ENCODE measurements at regions of chr7 and their contacts with region 1.

Region 1: DNA sequence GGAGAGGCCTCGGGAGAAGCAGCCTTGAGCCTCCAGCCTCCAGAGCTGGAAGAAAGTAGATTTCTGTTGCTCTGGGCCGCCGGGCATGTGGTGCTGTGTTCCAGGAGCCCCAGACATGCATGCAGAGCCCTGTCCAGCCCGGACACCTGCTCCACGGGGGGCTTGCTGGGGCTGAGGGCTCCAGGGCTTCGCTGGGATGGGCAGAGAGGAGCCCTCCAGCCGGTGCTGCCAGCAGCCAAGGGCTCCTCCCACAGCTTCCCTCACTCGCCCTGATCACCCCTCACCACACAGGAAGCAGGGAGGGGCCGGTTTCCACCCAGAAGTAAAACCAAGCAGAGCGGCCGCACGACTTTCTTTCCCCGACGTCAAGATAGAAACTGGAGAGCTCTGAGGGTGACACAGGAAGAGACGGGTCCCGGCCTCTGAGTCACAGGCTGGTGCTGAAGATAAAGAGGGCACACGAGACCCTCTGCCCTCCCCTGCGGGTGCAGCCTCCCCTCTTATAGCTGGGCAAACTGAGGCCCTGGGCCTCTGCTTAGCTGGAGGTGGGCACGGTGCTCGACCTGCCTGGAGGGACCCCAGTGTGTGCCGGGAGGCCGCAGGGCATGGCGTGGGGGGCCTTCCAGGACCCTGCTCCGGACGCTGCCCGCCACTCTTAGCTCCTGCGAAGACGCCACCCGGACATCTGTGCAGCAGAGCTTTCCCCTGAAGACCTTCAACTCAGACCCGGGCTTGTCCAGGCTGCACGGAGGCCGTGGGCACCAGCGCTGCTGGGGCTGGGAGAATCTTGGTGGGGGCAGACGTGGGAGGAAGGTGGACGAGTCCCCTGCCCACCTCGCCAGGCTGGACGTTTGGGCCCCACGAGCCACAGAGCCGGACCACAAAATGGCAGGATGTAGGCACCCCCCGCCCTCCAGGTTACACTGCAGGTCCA is 31.1 kb downstream of the ADAP1 start:
- DNase-seq: peak; percentile 97
- ATAC-seq: peak; percentile 92
- H3K4me3 Mint-ChIP-seq: peak overlapping the region; percentile 72
- H3K27ac Mint-ChIP-seq: peak overlapping the region; percentile 93
- H3K4me1 Mint-ChIP-seq: peaks cover 39% of the 10 kb centered on the region
- H3K27me3 Mint-ChIP-seq: no peaks in the 10 kb centered on the region

Region 2: DNA sequence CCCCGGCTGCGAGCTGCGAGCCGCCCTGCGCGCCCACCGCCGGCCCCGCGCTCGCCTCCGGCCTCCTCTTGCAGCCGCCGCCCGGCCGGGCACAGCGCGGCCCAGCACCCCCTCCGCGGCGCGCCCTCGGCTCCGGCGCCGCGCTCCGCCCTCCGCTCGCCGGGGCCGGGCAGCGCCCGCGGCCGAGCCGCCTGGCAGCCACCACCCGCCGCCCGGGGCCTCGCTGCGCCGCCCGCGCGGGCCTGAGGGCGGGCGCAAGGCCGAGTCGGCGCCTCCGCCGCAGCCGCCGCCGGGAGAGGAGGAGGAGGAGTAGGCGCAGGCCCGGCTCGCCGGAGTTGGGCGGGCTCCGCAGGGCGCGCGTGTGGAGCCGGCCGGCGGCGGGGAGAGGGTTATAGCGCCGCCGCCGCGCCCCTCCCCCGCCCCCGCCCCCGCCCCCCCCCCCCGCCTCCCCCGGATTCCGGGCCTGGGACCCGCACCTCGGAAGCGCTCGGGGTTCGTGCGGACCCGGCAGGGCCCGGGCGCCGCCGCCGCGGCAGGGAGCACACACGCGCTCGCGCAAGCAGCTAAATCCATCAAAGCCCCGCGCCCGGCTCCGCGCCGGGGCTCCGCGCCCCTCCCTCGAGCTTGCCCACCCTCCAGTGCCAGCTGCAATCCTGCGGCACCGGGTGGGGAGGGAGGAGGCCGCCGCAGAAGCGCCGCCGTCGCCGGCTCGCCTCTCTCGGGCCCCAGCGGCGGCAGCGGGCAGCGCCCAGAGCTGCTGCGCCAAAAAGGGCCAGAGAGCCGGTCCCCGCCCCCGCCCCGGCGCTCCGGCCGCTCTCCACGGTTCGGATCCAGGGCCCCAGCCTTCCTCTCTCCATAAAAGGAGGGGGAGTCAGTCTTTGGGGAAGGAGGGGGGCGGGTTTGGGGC is 403.6 kb before region 1 on chr7 and contains the start of gene PDGFA:
- CTCF ChIA-PET with region 1: no interaction called
- POLR2A ChIA-PET with region 1: no interaction called
- intact Hi-C with region 1: no loop called
- DNase-seq: peak; percentile 55
- ATAC-seq: peak; percentile 30
- H3K4me3 Mint-ChIP-seq: peak within 1 kb of the TSS; percentile 73
- H3K27ac Mint-ChIP-seq: no peak within 1 kb of the TSS
- H3K4me1 Mint-ChIP-seq: peaks cover 13% of the 10 kb centered on the region
- H3K27me3 Mint-ChIP-seq: peaks cover 41% of the 10 kb centered on the region
- total RNA-seq, gene PDGFA: 5.2 to 5.3 TPM

Region 3: GRCh38 chr7:831596-832166 is 91.7 kb before region 1 on chr7:
- CTCF ChIA-PET with region 1: no interaction called
- POLR2A ChIA-PET with region 1: no interaction called
- intact Hi-C with region 1: loop called in 1 of 2 experiments (anchors 1 kb)
- DNase-seq: no peak
- ATAC-seq: peak; percentile 69
- H3K4me3 Mint-ChIP-seq: peak overlapping the region; percentile 63
- H3K27ac Mint-ChIP-seq: peak overlapping the region; percentile 98
- H3K4me1 Mint-ChIP-seq: peaks cover 64% of the 10 kb centered on the region
- H3K27me3 Mint-ChIP-seq: no peaks in the 10 kb centered on the region

Region 4: DNA sequence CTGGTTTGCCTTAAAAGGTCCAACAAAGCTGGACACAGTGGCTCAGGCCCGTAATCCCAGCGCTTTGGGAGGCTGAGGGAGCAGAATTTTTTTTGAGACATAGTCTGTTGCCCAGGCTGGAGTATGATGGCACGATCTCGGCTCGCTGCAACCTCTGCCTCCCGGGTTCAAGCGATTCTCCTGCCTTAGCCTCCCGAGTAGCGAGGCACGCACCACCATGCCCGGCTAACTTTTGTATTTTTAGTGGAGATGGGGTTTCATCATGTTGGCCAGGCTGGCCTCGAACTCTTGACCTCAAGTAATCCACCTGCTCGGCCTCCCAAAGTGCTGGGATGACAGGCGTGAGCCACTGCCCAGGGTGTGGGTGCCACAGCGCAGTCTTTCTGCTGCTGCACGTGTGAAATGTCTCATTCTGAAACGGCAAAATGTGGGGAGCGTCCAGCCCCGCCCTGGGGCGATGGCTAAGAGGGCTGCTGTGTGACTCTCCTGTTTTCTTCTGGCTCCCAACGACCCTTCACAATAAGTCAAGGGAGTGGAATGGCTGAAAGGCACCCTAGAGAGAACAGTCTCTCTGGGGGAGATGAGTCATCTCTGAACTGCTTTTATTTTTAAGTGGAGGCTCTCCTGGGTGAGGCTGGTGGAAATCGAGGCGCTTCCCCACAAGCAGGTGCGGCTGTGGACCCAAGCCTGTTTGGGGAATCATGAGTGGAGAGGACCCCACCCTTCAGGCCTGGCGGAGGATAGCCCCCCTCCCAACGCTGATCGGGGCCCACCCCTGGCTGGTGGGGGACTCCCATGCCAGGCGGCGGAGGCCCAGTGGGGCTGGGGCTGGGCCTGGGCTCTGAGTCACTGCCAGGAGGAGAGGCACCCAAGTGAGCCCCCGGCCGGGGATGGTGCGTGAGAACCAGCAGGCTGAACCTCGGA is 13.0 kb after region 1 on chr7:
- CTCF ChIA-PET with region 1: interaction called, 3 read pairs
- POLR2A ChIA-PET with region 1: interaction called, 3 read pairs
- intact Hi-C with region 1: loop called in 1 of 2 experiments (anchors 2 kb)
- DNase-seq: peak; percentile 68
- ATAC-seq: peak; percentile 86
- H3K4me3 Mint-ChIP-seq: no peak overlapping the region
- H3K27ac Mint-ChIP-seq: peak overlapping the region; percentile 26
- H3K4me1 Mint-ChIP-seq: peaks cover 35% of the 10 kb centered on the region
- H3K27me3 Mint-ChIP-seq: no peaks in the 10 kb centered on the region

Region 5: DNA sequence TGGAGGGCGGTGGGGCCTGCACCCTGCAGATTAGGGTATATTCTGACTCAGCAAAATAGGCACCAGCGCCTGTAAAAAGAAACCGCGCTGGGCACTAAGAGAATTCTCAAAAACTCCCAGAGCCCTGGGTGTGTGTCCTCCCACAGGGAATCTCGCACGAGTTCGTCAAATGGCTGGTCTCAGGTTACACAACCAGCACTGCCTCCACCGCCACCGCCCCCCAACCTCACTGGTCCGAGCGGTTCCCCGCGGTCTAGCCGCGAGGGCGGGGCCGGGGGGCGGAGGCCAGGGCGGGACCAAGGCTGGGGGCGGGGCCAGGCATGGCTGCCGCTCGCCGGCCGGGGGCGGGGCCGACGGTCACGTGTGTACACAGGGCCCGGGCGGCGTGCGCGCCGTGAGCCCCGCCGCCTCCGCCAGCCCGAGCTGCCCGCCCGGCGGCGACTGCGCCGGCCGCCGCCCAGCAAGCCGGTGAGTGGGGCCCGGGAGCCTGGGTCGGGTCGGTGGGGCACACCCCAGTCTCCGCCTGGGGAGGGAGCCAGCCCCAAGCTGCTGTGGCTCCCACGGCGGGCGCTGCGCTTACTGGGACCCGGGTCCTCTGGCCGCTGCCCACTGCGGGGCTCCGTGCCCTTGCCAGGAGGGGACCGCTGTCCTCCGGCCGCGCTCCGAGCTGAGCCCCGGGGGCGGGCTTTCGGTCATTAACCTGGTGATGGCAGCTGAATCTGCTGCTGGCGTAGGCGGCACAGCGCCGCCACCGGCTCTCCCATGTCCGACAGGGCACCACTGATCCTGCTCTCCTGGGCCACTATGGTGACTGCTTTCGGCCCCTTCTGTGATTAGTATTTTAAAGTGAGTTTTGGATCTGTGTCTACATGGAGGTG is 121.1 kb after region 1 on chr7 and contains the start of gene GPR146:
- CTCF ChIA-PET with region 1: interaction called, 4 read pairs
- POLR2A ChIA-PET with region 1: no interaction called
- intact Hi-C with region 1: loop called in 1 of 2 experiments (anchors 5 kb)
- DNase-seq: peak; percentile 96
- ATAC-seq: peak; percentile 88
- H3K4me3 Mint-ChIP-seq: peak within 1 kb of the TSS; percentile 78
- H3K27ac Mint-ChIP-seq: peak within 1 kb of the TSS; percentile 73
- H3K4me1 Mint-ChIP-seq: peaks cover 61% of the 10 kb centered on the region
- H3K27me3 Mint-ChIP-seq: no peaks in the 10 kb centered on the region
- total RNA-seq, gene GPR146: 4.7 to 5.6 TPM

Region 6: DNA sequence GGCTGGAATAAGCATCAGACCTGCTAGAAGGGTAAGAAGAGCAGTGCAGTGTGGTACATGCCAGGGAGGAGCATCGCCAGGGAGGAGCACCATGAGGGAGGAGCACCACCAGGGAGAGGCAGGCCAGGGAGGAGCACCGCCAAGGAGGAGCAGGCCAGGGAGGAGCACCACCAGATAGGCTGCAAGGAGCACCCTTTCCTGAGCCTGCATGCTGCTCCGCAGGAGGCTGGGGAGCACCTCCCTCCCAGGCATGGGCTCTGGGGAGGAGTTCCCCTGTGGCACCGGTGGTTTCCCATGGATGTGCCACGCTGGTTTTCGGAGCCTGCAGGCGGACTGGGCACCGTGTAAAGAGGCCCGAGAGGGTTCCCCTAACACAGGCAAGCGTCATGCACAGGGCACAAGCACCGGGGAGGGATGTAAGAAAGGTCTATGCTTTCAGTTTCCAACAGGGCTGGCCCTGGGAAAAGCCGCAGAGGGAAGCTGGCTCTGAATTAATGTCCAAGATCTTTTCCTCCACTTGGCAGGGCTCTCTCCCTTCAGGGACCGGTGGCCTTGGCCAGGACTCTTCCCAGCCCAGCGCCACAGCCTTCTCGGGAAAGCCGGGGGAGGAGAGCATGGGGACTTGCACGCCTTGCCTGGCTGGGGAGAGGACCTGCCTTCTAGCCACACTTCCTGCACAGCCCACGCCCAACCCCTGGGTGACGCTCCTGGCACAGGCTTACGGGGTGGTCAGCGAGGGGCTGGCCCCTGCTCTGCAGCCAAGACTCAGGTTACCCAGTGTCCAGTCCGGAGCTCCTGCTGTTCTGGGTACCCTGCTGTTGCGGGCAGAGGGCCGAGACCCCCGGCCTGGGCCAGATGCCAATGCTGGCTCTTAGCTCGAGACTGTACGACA is 153.1 kb after region 1 on chr7:
- CTCF ChIA-PET with region 1: no interaction called
- POLR2A ChIA-PET with region 1: no interaction called
- intact Hi-C with region 1: no loop called
- DNase-seq: no peak
- ATAC-seq: no peak
- H3K4me3 Mint-ChIP-seq: no peak overlapping the region
- H3K27ac Mint-ChIP-seq: no peak overlapping the region
- H3K4me1 Mint-ChIP-seq: no peaks in the 10 kb centered on the region
- H3K27me3 Mint-ChIP-seq: no peaks in the 10 kb centered on the region

Region 7: DNA sequence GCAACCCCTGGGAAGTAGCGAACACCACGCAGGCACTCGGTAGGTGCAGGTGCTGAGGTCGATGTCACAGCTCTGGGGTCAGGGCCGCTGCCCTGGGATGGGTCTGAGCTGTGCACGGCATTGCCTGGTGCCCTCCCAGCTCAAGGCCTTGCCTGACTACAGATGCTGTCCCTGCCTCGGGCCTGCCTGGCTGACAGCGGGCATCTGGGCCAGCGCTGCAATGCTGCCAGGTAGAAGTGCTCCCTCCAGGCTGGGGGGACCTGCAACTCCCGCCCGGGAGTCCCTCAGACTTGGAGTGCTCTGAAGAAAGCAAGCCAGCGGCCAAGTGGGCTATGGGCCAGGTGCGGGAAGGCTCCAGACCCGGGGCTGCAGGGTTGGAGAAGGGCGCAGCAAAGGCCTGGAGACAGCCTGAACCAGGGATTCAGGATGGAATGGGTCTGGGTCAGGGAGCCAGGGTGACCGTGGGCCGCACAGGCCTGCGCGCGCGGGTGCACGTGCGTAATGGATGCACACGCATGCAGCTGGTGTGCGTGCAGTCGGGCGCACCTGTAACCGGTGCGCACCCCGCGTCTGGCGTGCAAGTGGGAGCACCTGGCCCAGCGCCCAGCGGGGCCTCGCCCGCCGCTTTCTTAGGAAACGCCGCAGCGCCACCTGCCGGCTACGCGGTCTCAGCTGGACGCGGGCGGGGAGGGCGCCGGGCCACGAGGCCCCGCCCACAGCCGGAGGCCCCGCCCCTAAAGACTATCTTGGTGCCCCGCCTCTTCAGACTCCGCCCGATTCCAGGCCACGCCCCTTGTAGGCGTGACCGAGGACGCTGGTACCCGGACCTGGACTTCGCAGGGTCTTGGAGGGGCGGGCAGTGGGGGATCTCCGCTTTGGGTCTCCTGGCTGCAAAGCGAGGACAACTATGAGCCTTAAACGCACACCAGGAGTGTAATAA is 489.2 kb after region 1 on chr7:
- CTCF ChIA-PET with region 1: no interaction called
- POLR2A ChIA-PET with region 1: no interaction called
- intact Hi-C with region 1: loop called in 1 of 2 experiments (anchors 5 kb)
- DNase-seq: peak; percentile 97
- ATAC-seq: peak; percentile 82
- H3K4me3 Mint-ChIP-seq: no peak overlapping the region
- H3K27ac Mint-ChIP-seq: no peak overlapping the region
- H3K4me1 Mint-ChIP-seq: peaks cover 14% of the 10 kb centered on the region
- H3K27me3 Mint-ChIP-seq: peaks cover 5% of the 10 kb centered on the region

Measured in activated CD4-positive, alpha-beta T cell treated with anti-CD3 and anti-CD28 coated beads for 36 hours (primary cell).